ENCODE measurements at regions of chr3 and their contacts with region 1.

Region 1: DNA sequence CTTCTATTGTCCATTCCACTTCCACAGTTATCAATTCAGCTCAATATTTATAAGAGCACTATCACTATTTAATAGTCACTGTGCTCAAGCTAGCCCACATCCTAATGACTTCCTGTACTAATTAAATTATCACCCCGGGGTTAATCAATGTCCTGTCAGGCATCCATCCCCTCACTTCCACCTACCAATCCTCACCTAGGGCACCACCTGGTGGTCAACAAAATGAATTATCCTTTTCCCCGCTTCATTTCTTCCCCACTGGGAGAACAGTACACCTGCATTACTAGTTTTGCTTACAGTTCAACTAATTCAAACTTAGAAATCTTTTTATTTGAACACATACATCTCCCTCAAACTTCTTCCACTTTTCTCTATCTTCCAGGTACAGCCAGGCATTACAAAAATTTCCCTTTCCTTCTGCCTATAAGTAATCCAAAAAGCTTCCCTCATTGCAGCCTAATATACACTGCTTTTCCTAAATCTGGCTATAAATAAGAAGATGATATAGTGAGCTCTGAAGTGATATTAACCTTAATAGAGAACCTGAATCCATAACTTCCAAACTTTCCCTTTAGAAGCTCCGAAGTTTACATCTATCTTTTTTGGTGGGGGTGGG is 68.5 kb downstream of the TMCC1 start:
- DNase-seq: no peak
- H3K4me3 ChIP-seq: no peak overlapping the region
- H3K27ac ChIP-seq: no peak overlapping the region
- H3K4me1 ChIP-seq: no peaks in the 10 kb centered on the region
- H3K27me3 ChIP-seq: no peaks in the 10 kb centered on the region
- CTCF ChIP-seq: peak; percentile 50 to 60 (median 56)
- POLR2A ChIP-seq: no peak

Region 2: DNA sequence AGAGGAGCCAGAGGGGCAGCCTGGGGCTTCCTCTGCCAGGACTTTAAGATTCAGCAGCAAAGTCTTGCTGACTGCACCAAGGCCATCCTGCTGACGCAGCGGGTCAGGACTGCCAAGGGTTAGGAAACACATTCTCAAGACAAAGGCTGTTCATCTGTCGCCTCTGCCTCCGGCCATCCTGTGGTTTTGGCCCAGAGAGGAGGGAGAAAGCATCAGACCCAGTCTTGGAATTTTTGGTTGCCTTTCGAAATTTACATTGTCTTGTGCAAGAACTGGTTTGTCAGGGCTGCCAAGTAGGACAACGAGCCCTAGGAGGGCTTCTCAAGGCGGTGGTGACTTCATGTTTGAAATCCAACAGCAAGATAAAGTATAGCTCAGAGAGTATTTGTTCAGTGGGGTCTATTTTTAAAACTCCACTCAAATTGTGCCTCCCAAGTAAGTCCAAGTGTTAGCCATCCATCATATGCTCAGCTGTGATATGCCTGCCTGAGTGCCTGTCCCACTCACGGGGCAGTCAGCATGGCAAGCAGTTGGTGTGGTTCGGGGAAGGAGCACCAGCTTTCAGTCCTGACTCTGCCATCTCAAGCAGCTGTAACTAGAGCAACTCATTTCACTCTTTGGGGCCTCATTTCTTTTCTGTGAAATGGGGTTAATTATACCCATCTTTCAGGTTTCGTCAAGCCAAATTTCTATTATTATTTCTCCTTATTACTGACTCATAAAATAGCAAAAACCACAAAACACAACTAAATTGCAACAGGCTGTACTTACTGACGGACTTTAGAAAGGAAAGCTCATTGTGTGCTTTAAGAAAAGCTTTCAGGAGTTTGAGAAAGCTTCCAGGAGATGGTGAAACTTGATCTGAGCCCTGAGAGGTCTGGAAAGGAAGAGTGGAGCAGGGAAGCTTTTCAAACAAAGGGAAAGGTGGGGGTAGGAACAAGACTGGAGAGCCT is 339.0 kb before region 1 on chr3:
- intact Hi-C with region 1: loop called (anchors 10 kb)
- DNase-seq: peak; percentile 82 to 86
- H3K4me3 ChIP-seq: no peak overlapping the region
- H3K27ac ChIP-seq: peak overlapping the region; percentile 67 to 71
- H3K4me1 ChIP-seq: no peaks in the 10 kb centered on the region
- H3K27me3 ChIP-seq: no peaks in the 10 kb centered on the region
- CTCF ChIP-seq: no peak
- POLR2A ChIP-seq: no peak